Esophagus muscularis mucosa (tissue), 4 donors: ENCODE measurements at regions of chr4 and their contacts with region 1.

Region 1: DNA sequence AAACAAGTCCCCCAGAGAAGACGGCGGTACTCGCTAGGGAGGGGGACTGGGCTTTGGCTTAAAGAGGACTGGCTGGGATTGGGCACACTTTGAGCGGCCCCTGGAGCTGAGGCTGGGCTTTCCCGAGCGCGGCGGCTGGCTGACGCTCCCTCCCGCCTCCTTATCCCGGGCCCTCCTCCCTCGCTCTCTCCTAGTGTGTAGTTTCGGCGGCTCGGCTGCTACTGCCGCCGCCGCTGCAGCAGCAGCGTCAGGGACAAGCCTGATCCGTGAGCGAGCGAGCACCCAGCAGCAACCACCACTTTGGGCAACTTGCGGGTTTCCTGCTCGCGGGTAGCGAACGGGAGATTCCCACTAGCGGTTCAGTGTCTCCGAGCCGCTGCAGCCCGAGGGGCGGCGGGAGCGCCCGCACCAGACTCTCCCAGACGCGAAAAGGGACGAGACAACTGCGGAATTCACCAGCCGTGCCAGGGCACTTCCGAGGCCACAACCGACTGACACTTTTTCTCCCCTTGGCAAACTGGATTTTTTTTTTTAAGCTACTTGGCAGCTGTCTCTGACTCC is 629 bp upstream of the PCDH7 start:
- DNase-seq: no peak
- H3K4me3 ChIP-seq: peak overlapping the region; percentile 66 to 84 (median 74)
- H3K27ac ChIP-seq: peak overlapping the region; percentile 77 to 91 (median 84)
- H3K4me1 ChIP-seq: peaks cover 16 to 46% (median 34%) of the 10 kb centered on the region in 4 donors
- H3K27me3 ChIP-seq: peaks cover 0 to 31% (median 0%) of the 10 kb centered on the region in 4 donors
- CTCF ChIP-seq: no peak
- EP300 ChIP-seq: no peak
- POLR2A ChIP-seq: no peak

Region 2: DNA sequence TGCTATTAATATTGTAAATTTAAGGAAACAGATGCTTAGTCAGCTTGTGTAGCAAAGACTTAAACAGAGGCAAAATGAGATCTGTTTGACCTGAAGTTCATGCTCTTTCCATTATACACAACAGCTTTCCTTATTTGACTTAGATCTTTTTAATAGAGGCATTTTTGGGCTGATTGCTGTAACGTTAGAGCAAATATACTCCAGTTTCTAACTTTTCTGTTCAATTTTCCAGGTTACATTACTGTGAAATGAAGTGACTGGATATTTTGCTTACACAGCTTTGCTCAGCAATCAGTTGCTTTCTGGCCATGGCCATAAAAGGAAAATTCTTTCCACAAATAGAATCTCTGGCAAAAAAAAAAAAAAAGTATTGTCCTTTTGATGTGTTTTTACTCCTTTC is 146.8 kb after region 1 on chr4:
- intact Hi-C with region 1: loop called (anchors 5 kb)
- DNase-seq: no peak
- H3K4me3 ChIP-seq: peak overlapping the region in 1 of 4 donors; percentile 4
- H3K27ac ChIP-seq: peak overlapping the region; percentile 64 to 77 (median 70)
- H3K4me1 ChIP-seq: peaks cover 15 to 87% (median 70%) of the 10 kb centered on the region in 4 donors
- H3K27me3 ChIP-seq: no peaks in the 10 kb centered on the region
- CTCF ChIP-seq: no peak
- EP300 ChIP-seq: no peak
- POLR2A ChIP-seq: no peak